ENCODE measurements at regions of chr12 and their contacts with region 1.

Region 1: GRCh38 chr12:70576346-70577282 is 60.6 kb downstream of the PTPRB start:
- DNase-seq: no peak
- ATAC-seq: no peak
- H3K4me3 Mint-ChIP-seq: no peak overlapping the region
- H3K27ac Mint-ChIP-seq: no peak overlapping the region
- H3K4me1 Mint-ChIP-seq: no peaks in the 10 kb centered on the region
- H3K27me3 Mint-ChIP-seq: no peaks in the 10 kb centered on the region

Region 2: DNA sequence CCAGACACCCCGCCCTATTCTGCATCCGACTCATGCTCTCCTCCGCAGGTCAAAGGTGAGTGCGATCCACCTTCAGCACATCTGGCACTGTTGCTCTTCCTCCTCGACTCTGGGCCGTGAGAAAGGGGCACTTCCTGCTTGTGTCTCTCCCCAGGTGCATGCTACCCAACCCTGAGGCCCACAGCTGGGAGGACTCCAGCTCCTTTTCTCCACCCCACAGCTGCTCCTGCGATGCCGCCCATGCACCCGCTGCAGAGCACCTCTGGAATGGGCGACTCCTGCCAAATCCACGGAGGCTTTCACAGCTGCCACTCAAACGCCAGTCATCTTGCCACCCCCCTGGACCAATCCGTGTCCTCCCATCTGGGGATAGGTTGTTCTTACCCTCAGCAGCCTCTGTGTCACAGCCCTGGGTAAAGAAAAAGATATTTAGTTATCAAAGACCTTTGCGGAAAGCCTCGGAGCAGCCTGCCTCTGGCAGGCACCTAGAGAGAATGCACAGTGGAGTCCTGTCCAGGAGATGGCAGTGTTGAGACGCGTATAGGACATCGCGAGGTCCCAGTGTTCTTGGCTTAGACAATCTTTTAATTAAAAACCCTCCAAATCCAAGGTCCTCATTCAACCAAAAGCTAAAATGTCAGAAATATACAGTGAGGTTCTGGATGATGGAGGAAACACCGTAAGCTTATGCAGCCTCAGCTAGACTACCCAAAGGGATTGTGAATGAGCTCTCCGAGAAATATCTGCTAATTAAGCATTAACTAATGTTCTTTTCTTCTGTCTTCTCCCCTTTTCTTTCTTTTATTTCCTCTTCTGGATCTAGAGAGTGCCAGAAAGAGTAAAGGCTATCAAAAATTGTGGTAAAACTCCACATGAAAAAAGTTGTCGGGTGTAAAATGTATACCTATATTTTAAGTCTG is 697.3 kb before region 1 on chr12:
- CTCF ChIA-PET with region 1: interaction called, 11 read pairs
- POLR2A ChIA-PET with region 1: no interaction called
- DNase-seq: peak; percentile 75
- ATAC-seq: peak; percentile 96
- H3K4me3 Mint-ChIP-seq: no peak overlapping the region
- H3K27ac Mint-ChIP-seq: no peak overlapping the region
- H3K4me1 Mint-ChIP-seq: peaks cover 5% of the 10 kb centered on the region
- H3K27me3 Mint-ChIP-seq: peaks cover 6% of the 10 kb centered on the region

Measured in activated CD8-positive, alpha-beta T cell treated with anti-CD3 and anti-CD28 coated beads, Interleukin-2, amount 10 ng/mL, durations not matched to agents 7 days and 5 days (primary cell).